HCT116 (cell line): ENCODE measurements at regions of chr22 and their contacts with region 1.

Region 1: DNA sequence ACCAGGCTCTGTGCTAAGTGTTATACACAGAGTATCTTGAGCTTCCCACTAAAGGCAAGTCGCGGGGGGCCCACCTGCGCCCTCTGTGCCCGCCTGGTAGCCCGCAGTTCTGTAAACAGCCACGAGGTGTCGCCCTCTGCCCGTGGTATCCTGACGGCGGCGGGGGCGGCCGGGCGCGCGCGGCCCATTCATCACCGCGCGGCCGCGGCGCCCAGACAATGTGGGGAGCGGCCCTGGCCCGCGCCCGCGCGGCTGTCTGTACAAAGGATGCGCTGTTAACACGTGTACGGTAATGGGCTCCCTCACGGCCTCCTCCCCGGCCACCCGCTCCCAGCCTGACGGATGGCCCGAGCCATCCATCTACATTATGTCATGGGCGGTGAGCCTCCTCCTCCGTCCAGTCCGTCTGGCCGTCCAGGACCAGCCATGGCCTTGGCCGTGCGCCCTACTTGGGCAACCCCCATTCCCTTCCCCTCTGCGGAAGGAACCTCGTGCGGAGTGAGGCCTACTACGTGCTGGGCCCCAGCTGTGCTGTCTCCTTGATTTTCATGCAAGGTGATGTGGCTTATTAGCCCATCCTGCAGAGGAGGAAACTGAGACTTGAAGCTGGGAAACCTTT is 99.4 kb downstream of the MIAT start:
- DNase-seq: peak; percentile 8
- ATAC-seq: peak; percentile 90
- H3K4me3 ChIP-seq: peak overlapping the region; percentile 7 to 24; a peak in 1 of 4 replicates
- H3K27ac ChIP-seq: no peak overlapping the region
- H3K4me1 ChIP-seq: peaks cover 0 to 4% of the 10 kb centered on the region in 2 experiments; a peak in 1 of 4 replicates
- H3K27me3 ChIP-seq: no peaks in the 10 kb centered on the region
- CTCF ChIP-seq: peak; percentile 36 to 92 (median 78); a peak in 5 of 6 replicates
- POLR2A ChIP-seq: no peak
- RAD21 ChIP-seq: peak; percentile 68

Region 2: GRCh38 chr22:26295563-26296126 is 461.1 kb before region 1 on chr22:
- CTCF ChIA-PET with region 1: no interaction called
- POLR2A ChIA-PET with region 1: no interaction called
- RAD21 ChIA-PET with region 1: no interaction called
- intact Hi-C with region 1: no loop called
- DNase-seq: no peak
- ATAC-seq: no peak
- H3K4me3 ChIP-seq: no peak overlapping the region
- H3K27ac ChIP-seq: no peak overlapping the region
- H3K4me1 ChIP-seq: no peaks in the 10 kb centered on the region
- H3K27me3 ChIP-seq: peaks cover 48% of the 10 kb centered on the region
- CTCF ChIP-seq: no peak
- POLR2A ChIP-seq: no peak
- RAD21 ChIP-seq: no peak

Region 3: GRCh38 chr22:27270818-27271510 is 514.2 kb after region 1 on chr22:
- CTCF ChIA-PET with region 1: no interaction called
- POLR2A ChIA-PET with region 1: no interaction called
- RAD21 ChIA-PET with region 1: no interaction called
- intact Hi-C with region 1: no loop called
- DNase-seq: no peak
- ATAC-seq: no peak
- H3K4me3 ChIP-seq: no peak overlapping the region
- H3K27ac ChIP-seq: no peak overlapping the region
- H3K4me1 ChIP-seq: no peaks in the 10 kb centered on the region
- H3K27me3 ChIP-seq: peaks cover 34% of the 10 kb centered on the region
- CTCF ChIP-seq: no peak
- POLR2A ChIP-seq: no peak
- RAD21 ChIP-seq: no peak

Region 4: GRCh38 chr22:27804470-27805297 is 1047.9 kb after region 1 on chr22:
- CTCF ChIA-PET with region 1: no interaction called
- POLR2A ChIA-PET with region 1: no interaction called
- RAD21 ChIA-PET with region 1: no interaction called
- intact Hi-C with region 1: loop called (anchors 5 kb)
- DNase-seq: no peak
- ATAC-seq: peak; percentile 78
- H3K4me3 ChIP-seq: no peak overlapping the region
- H3K27ac ChIP-seq: no peak overlapping the region
- H3K4me1 ChIP-seq: peaks cover 6 to 19% of the 10 kb centered on the region in 2 experiments; a peak in 2 of 4 replicates
- H3K27me3 ChIP-seq: no peaks in the 10 kb centered on the region
- CTCF ChIP-seq: peak; percentile 50 to 80 (median 76); a peak in 5 of 6 replicates
- POLR2A ChIP-seq: no peak
- RAD21 ChIP-seq: peak; percentile 84

Region 5: DNA sequence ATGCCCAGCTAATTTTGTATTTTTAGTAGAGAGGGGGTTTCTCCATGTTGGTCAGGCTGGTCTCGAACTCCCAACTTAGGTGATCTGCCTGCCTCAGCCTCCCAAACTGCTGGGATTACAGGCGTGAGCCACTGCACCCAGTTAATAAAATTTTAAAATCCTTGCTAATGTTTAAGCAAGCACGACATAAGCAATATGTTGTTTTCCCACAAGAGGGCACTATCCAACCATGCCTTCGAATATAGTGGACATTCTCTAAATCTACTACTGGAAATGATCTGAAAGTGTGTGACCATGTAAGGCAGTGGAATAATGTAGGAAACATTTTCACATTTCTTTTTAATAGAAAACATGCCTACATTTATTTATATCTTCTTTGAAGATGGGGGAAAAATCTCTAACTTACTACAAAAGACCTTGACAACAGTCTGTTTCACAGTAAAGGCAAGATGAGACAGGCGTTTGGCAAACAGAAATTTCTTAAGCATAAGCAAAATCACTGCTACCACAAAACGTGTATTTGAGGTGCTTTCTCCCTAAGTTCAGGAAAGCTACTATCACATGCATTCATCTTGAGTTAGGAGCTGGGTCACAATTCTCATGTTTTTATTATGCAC is 1124.1 kb after region 1 on chr22:
- CTCF ChIA-PET with region 1: interaction called, 3 read pairs
- POLR2A ChIA-PET with region 1: no interaction called
- RAD21 ChIA-PET with region 1: no interaction called
- intact Hi-C with region 1: loop called (anchors 2 kb)
- DNase-seq: peak; percentile 47
- ATAC-seq: peak; percentile 76
- H3K4me3 ChIP-seq: no peak overlapping the region
- H3K27ac ChIP-seq: no peak overlapping the region
- H3K4me1 ChIP-seq: no peaks in the 10 kb centered on the region
- H3K27me3 ChIP-seq: no peaks in the 10 kb centered on the region
- CTCF ChIP-seq: peak; percentile 33 to 74 (median 74); a peak in 5 of 6 replicates
- POLR2A ChIP-seq: no peak
- RAD21 ChIP-seq: peak; percentile 61

Region 6: DNA sequence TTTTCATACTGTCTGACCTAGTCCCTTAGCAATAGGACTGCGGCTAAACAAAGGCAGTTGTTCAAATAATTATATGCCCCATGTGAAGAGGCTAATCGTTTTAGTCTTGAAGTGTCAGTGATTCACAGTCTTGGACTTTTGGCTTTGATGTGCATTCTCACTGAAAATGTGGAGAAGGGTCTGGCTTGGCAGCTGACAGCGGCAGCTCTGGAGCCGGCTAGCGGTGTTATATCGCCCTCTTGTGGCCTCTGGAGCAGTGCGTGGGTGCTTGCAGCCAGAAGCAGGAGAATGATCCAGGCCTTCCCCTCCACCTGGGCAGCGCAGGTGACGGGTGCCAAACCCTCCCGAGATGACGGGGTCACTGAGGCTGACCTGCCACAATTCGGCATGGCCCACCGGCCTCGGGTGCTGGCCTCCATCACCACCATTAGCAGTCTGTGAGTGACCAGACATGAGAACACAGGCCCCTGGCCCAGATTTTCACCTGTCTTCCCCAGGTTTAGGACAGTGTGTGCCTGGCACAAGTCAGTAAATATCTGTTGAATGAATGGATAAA is 1252.6 kb after region 1 on chr22:
- CTCF ChIA-PET with region 1: no interaction called
- POLR2A ChIA-PET with region 1: no interaction called
- RAD21 ChIA-PET with region 1: no interaction called
- intact Hi-C with region 1: loop called (anchors 2 kb)
- DNase-seq: peak; percentile 49
- ATAC-seq: peak; percentile 96
- H3K4me3 ChIP-seq: no peak overlapping the region
- H3K27ac ChIP-seq: no peak overlapping the region
- H3K4me1 ChIP-seq: no peaks in the 10 kb centered on the region
- H3K27me3 ChIP-seq: no peaks in the 10 kb centered on the region
- CTCF ChIP-seq: peak; percentile 69 to 99 (median 93)
- POLR2A ChIP-seq: no peak
- RAD21 ChIP-seq: peak; percentile 89

Region 7: DNA sequence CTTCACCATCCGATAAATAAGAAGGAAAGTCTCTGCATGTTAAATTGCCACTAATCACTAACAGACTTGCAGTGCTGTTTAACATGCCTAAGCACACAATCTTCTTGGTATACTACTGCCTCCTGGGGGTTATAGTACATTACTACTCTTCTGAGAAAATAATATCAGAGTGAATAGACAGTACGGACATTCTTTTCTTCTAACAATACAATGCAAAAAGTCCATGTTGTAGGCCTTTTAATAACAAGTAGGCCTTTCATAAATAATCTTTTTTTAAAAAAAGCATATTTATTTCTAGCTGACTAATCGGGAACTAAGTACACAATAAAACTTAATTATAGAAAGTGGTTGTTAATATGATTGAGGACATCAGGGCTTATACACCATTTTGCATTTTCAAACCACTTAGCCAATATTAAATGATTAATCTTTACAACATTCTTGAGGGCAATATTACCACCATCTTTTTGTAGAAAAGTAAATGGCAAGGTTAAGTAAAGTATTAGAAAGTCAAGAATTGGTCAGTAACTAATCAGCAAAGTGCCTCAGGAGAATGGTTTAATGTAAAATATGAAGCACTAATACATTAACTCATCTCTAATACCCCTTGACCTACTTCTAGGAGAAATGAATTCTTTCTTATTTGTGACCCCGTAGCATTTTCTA is 1838.1 kb after region 1 on chr22:
- CTCF ChIA-PET with region 1: interaction called, 3 read pairs
- POLR2A ChIA-PET with region 1: no interaction called
- RAD21 ChIA-PET with region 1: no interaction called
- intact Hi-C with region 1: loop called (anchors 5 kb)
- DNase-seq: peak; percentile 35
- ATAC-seq: peak; percentile 94
- H3K4me3 ChIP-seq: no peak overlapping the region
- H3K27ac ChIP-seq: no peak overlapping the region
- H3K4me1 ChIP-seq: no peaks in the 10 kb centered on the region
- H3K27me3 ChIP-seq: no peaks in the 10 kb centered on the region
- CTCF ChIP-seq: peak; percentile 63 to 82 (median 66); a peak in 5 of 6 replicates
- POLR2A ChIP-seq: no peak
- RAD21 ChIP-seq: peak; percentile 71